Activated CD4-positive, alpha-beta memory T cell treated with anti-CD3 and anti-CD28 coated beads for 36 hours (primary cell): ENCODE measurements at regions of chr4 and their contacts with region 1.

Region 1: GRCh38 chr4:879729-880077 is 52.4 kb downstream of the GAK start:
- DNase-seq: peak; percentile 87
- H3K4me3 Mint-ChIP-seq: peak overlapping the region; percentile 68
- H3K27ac Mint-ChIP-seq: peak overlapping the region; percentile 95
- H3K4me1 Mint-ChIP-seq: peaks cover 30% of the 10 kb centered on the region
- H3K27me3 Mint-ChIP-seq: no peaks in the 10 kb centered on the region

Region 2: DNA sequence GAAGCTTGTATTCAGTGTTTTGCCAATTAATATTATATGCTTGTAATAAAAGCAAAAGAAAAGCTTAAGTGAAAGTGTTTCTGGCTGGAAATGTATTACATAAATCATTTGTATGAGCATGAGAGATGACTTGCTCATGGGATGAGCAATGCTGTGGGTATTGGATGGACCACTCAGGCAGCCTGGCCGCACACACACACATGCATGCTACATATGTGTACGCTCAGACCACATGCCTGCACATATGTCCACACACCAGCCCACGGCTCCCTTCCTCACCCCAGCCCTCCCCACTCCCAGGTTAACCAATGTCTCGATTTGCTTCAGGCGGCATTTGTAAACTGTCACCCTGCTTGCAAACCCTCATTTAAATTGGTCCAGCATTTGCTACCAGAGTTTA is 109.7 kb before region 1 on chr4:
- CTCF ChIA-PET with region 1: interaction called, 3 read pairs
- POLR2A ChIA-PET with region 1: no interaction called
- intact Hi-C with region 1: loop called (anchors 1 kb)
- DNase-seq: no peak
- H3K4me3 Mint-ChIP-seq: no peak overlapping the region
- H3K27ac Mint-ChIP-seq: peak overlapping the region; percentile 14
- H3K4me1 Mint-ChIP-seq: peaks cover 22% of the 10 kb centered on the region
- H3K27me3 Mint-ChIP-seq: no peaks in the 10 kb centered on the region

Region 3: DNA sequence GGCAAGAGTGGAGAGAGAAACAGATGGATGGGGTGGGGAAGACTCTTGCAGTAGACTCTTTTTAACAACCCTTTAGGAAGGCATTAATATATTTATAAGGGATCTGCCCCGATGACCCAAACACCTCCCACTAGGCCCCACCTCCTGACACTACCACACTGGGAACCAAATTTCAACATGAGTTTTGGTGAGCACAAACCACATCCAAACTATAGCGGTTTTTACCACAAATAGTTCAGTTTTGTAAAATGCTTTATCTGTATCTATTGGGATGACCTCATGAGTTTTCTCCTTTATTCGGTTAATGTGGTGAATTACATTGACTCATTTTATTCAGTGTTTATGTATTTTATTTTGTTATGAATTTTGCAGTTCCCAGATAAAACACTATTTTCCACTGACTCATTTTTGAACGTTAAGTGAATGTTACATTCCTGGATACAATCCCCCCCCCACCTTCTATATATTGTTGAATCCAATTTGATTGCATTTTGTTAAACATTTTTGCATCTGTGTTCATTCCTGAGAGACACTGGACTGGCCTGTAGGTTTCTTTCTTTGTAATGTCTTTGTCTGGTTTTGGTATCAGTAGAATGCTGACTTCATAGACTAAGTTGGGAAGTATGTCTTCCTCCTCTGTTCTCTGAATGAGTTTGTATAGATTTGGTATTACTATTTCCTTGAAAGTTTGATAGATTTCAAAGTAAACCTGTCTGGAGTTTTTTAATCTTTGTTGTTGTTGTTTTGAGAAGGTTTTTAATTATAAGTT is 39.8 kb before region 1 on chr4:
- CTCF ChIA-PET with region 1: no interaction called
- POLR2A ChIA-PET with region 1: no interaction called
- intact Hi-C with region 1: loop called (anchors 2 kb)
- DNase-seq: peak; percentile 32
- H3K4me3 Mint-ChIP-seq: no peak overlapping the region
- H3K27ac Mint-ChIP-seq: peak overlapping the region; percentile 1
- H3K4me1 Mint-ChIP-seq: peaks cover 9% of the 10 kb centered on the region
- H3K27me3 Mint-ChIP-seq: no peaks in the 10 kb centered on the region

Region 4: GRCh38 chr4:986879-987623 is 107.3 kb after region 1 on chr4 and contains the start of gene IDUA:
- CTCF ChIA-PET with region 1: interaction called, 3 read pairs
- POLR2A ChIA-PET with region 1: no interaction called
- intact Hi-C with region 1: loop called (anchors 1 kb)
- DNase-seq: peak; percentile 92
- H3K4me3 Mint-ChIP-seq: peak within 1 kb of the TSS; percentile 88
- H3K27ac Mint-ChIP-seq: peak within 1 kb of the TSS; percentile 72
- H3K4me1 Mint-ChIP-seq: peaks cover 21% of the 10 kb centered on the region
- H3K27me3 Mint-ChIP-seq: no peaks in the 10 kb centered on the region
- total RNA-seq, gene IDUA: 9.0 to 10.1 TPM

Region 5: GRCh38 chr4:1200425-1201035 is 320.8 kb after region 1 on chr4:
- CTCF ChIA-PET with region 1: no interaction called
- POLR2A ChIA-PET with region 1: no interaction called
- intact Hi-C with region 1: loop called (anchors 1 kb)
- DNase-seq: peak; percentile 40
- H3K4me3 Mint-ChIP-seq: peak overlapping the region; percentile 67
- H3K27ac Mint-ChIP-seq: peak overlapping the region; percentile 97
- H3K4me1 Mint-ChIP-seq: peaks cover 33% of the 10 kb centered on the region
- H3K27me3 Mint-ChIP-seq: no peaks in the 10 kb centered on the region